ENCODE measurements at regions of chr1 and their contacts with region 1.

Region 1: DNA sequence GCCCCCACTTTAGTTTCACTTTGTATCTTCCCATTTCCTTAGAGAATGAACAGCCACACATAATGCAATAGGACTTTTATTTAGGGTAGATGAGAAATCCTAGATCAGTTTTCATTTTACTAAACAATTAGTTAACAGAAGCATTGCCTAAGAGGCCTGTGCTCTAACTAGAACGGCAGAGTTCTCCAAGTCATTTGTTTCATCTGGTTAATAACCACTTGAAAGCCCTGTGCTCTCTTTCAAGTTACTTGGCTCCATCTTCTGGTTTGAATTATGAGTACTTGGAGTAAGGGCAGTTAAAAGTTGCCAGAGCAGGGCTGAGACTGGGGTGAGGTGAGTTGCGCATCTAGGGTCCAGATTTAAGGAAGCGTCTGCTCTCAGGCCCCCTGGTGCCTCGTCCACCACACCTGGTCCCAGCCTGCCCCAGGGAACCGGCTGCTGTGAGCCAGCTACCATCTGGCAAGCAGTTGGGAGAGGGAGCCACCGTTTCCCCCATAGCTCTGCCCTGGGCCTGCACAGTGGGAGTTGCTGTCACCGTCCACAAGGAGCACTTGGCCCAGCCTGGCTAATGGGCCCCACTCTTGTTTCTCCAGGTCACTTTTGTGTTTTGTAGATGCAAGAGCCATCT is 18.1 kb upstream of the SLC44A3 start:
- DNase-seq: peak; percentile 34 to 39
- ATAC-seq: peak; percentile 69

Region 2: GRCh38 chr1:94481473-94481933 is 320.5 kb before region 1 on chr1:
- intact Hi-C with region 1: loop called in 1 of 2 experiments (anchors 2 kb)
- DNase-seq: peak; percentile 12 to 26
- ATAC-seq: peak; percentile 89

Region 3: GRCh38 chr1:94522304-94522703 is 279.7 kb before region 1 on chr1:
- intact Hi-C with region 1: loop called (anchors 5 to 10 kb)
- DNase-seq: no peak
- ATAC-seq: peak; percentile 73